Caco-2 (cell line): ENCODE measurements at regions of chr20 and their contacts with region 1.

Region 1: DNA sequence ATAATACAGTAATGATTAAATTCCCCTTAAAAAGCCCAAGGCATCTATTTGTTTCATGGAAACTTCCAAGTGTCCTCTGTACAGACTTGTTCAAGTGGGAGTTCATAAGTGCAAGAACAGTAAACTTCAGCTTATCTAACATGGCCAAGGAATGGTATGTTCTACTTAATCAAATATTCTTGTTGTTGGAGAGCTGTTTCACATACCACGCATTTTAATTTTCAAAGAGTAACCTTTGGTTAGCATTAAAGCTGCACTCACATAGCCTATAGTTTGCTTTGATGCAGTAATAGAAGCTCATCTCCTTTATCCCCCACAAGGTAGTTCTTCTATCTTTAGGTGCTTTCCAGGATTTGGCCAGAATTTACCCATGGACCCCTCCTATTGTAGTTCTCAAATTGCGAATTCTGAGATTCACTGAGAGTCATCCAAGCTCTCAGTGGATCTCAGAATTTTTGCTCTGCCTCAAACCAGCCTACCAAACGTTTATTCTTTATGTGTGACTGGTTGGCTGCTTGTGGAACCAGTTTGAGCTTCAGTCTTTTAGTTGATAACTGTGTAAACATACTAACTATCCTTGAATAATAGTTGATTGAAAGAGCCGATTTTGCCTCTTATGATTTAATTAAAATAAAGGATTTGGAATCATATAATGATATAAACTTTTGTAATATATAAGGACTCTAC is 668.0 kb upstream of the FLRT3 start:
- DNase-seq: peak; percentile 47 to 54
- H3K4me3 ChIP-seq: no peak overlapping the region
- H3K4me3 Mint-ChIP-seq: no peak overlapping the region
- H3K27ac Mint-ChIP-seq: peak overlapping the region; percentile 80
- H3K4me1 ChIP-seq: peaks cover 32% of the 10 kb centered on the region
- H3K4me1 Mint-ChIP-seq: peaks cover 29% of the 10 kb centered on the region
- H3K27me3 ChIP-seq: no peaks in the 10 kb centered on the region
- H3K27me3 Mint-ChIP-seq: no peaks in the 10 kb centered on the region
- CTCF ChIP-seq: no peak

Region 2: GRCh38 chr20:14717134-14717999 is 288.1 kb before region 1 on chr20:
- CTCF ChIA-PET with region 1: no interaction called
- POLR2A ChIA-PET with region 1: no interaction called
- intact Hi-C with region 1: no loop called
- DNase-seq: peak in 1 of 2 experiments; percentile 35
- H3K4me3 ChIP-seq: no peak overlapping the region
- H3K4me3 Mint-ChIP-seq: peak overlapping the region; percentile 52
- H3K27ac Mint-ChIP-seq: peak overlapping the region; percentile 88
- H3K4me1 ChIP-seq: peaks cover 26% of the 10 kb centered on the region
- H3K4me1 Mint-ChIP-seq: peaks cover 31% of the 10 kb centered on the region
- H3K27me3 ChIP-seq: no peaks in the 10 kb centered on the region
- H3K27me3 Mint-ChIP-seq: no peaks in the 10 kb centered on the region
- CTCF ChIP-seq: no peak

Region 3: DNA sequence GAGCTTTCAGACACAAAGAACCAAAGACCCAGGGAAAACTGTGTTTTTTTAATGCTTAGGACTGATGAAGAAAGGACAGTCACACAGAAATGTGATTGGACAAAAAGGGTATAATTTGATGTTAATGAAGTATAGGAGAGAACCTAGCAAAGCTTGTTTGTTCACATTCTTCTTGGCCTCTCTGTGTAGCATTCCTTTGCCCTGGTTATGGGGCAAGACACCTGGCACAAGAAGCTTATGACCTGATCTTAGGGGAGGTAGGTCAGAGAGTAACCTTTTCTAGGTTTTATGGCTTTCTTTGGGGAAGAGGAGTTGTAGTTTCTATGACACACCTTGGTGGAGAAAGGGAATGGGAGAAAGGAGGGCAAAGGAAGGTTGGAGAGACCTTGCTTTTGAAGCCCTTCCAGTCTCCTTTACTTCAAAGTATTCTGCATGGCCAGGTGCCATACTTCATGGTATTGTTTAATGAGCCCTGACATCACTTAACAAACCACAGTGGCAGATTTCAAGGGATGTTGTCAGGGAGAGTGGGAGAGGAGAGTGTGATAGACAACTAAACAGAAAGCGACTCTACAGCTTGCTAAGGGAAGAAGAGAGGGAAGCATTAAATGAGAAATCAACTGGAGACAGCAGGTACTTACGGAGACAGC is 33.8 kb after region 1 on chr20:
- CTCF ChIA-PET with region 1: no interaction called
- POLR2A ChIA-PET with region 1: no interaction called
- intact Hi-C with region 1: loop called (anchors 2 kb)
- DNase-seq: peak; percentile 19 to 45
- H3K4me3 ChIP-seq: no peak overlapping the region
- H3K4me3 Mint-ChIP-seq: no peak overlapping the region
- H3K27ac Mint-ChIP-seq: peak overlapping the region; percentile 82
- H3K4me1 ChIP-seq: peaks cover 11% of the 10 kb centered on the region
- H3K4me1 Mint-ChIP-seq: peaks cover 15% of the 10 kb centered on the region
- H3K27me3 ChIP-seq: no peaks in the 10 kb centered on the region
- H3K27me3 Mint-ChIP-seq: no peaks in the 10 kb centered on the region
- CTCF ChIP-seq: no peak